A673 (cell line): ENCODE measurements at regions of chr11 and their contacts with region 1.

Region 1: DNA sequence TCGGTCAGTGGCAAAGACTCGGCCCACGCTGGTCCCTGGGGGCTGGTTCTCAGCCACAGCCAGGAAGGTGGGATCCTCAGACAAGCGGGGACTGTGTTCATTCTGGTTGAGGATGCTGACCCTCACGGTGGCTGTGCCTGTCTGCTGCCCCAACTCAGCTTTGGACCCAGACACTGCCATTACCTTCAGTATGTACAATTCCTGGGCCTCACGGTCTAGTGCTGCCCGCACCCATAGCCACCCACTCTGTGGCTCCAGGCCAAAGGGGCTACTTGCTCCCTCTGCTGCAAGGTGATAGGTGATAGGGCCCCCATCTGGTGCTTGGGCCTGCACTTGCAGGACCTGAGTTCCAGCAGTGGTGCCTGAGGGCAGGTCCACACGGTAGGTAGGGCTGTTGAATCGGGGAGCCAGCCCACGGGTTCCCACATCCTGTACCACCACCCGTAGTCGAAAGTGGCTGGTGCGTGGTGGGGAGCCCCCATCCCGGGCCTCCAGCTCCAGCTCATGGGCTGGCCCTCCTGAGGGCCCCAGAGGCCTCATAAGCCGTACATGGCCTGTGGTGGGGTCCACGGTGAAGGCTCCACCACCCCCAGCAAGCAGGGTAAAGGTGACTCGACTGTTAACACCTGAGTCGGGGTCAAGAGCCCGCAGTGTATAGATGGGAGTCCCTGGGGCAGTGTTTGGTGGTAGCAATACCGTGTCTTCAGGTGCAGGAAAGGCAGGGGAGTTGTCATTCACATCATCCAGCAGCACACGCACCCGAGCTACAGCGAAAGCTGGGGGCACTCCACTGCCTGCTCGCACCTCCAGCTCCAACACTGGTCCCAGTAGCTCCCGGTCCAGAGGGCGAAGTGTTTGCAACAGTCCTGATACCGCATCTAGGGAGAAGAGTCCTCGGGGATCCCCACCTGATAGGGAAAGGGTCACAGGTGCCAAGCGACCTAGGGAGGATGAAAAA is 13.2 kb upstream of the TPP1 start:
- DNase-seq: no peak
- H3K4me3 ChIP-seq: no peak overlapping the region
- H3K27ac ChIP-seq: no peak overlapping the region
- H3K4me1 ChIP-seq: no peaks in the 10 kb centered on the region
- H3K27me3 ChIP-seq: no peaks in the 10 kb centered on the region
- CTCF ChIP-seq: no peak

Region 2: DNA sequence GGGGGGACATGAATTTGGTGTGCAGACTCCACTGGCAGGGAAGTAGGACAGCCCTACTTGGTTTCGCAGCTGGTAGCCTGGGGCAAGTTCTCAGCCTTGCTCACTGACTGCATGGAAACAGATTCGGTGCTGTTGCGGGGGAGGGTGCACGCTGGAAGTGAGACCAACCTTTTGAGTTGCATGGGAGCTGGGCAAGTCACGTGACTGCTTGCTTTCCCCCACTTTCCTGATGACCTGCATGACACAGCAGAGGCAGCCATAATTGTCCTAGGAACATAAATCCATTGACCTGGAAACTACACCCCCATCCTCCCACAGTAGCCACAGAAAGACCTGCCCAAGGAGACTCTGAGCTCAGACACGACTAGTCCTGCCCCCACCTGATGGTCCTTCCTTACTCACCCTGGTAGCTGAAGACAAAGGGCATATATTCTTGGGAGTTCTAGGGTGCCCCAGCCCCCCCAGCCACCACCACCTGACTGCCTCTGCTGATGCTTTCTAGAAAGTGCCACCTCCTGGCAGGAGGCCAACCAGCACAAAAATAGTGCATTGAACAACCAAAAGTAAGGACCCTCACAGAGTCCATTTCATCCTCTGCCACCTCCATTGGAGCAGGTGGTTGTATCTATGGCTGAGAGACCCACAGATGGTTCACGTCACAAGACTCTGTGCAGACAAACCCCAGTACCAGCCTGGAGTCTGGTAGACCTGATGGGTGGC is 1373.7 kb before region 1 on chr11:
- CTCF ChIA-PET with region 1: interaction called, 14 read pairs
- POLR2A ChIA-PET with region 1: no interaction called
- intact Hi-C with region 1: no loop called
- DNase-seq: no peak
- H3K4me3 ChIP-seq: no peak overlapping the region
- H3K27ac ChIP-seq: no peak overlapping the region
- H3K4me1 ChIP-seq: no peaks in the 10 kb centered on the region
- H3K27me3 ChIP-seq: no peaks in the 10 kb centered on the region
- CTCF ChIP-seq: no peak

Region 3: GRCh38 chr11:6062691-6063358 is 569.6 kb before region 1 on chr11:
- CTCF ChIA-PET with region 1: no interaction called
- POLR2A ChIA-PET with region 1: no interaction called
- intact Hi-C with region 1: no loop called
- DNase-seq: no peak
- H3K4me3 ChIP-seq: no peak overlapping the region
- H3K27ac ChIP-seq: no peak overlapping the region
- H3K4me1 ChIP-seq: no peaks in the 10 kb centered on the region
- H3K27me3 ChIP-seq: no peaks in the 10 kb centered on the region
- CTCF ChIP-seq: 0 out of 2 replicates have a peak, but pooled peaks have one; percentile 10

Region 4: DNA sequence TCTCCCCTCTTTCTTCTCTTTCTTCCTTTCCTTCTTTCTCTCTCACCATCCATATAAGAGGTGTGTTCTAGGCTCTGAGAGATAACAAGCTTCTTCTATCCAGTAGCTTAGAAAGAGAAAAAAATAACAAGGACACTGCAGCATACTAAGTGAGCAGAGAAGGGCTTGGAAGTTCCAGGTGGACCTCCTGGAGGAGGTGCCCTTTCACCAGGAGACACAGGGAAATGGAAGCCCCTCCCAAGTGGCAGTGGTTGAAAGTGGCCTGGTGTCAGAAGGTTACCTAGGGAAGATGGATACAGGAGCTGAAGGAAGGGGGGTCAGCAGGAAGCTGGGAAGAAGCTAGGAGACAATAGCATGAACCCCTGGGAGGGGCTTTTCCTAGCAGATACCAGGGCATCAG is 17.7 kb after region 1 on chr11:
- CTCF ChIA-PET with region 1: no interaction called
- POLR2A ChIA-PET with region 1: no interaction called
- intact Hi-C with region 1: no loop called
- DNase-seq: no peak
- H3K4me3 ChIP-seq: no peak overlapping the region
- H3K27ac ChIP-seq: no peak overlapping the region
- H3K4me1 ChIP-seq: peaks cover 15% of the 10 kb centered on the region
- H3K27me3 ChIP-seq: no peaks in the 10 kb centered on the region
- CTCF ChIP-seq: no peak

Region 5: DNA sequence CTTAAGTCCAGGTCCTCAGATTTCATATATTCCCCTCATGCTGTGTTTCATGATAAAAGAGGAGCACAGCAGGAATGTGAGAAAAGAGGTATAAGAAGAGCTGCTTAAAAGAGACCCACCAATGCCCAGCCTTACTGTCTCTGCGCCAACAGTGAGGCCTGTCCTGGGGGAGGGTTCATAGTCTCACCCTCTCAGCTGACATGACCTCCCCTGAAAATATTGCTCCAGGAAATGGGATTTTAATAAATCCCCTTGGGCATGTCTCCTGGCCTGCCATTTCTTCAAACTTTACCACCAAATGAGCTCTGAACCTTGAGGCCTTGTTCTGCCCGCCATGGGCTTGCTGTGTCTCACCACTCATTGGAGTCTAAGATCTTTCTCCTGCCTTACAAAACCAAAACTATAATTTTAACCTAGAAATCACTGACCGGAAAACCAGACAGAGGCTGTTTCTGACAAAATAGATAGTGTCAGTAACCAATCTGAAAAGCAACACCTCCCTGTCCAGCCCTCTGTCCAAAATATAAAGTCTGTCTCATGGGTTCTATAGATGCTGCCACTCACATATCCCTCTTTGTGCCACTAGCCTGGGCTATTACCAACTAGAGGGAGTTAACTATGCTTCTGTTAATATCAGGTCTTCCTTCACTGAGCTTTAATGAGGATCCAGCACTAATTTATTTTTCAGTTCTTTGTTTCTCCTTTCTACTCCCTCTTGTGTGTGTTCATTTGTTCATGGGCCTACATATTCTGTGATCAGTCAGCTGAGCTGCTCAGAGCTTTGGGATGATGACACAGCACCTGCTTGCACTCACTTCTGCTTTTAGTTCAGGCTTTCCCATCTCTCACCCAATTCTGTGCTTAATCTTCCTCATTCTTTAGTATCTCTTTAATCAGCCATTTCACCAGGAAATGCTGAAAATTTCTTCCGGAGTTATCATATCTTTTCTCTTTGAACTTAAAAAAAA is 139.8 kb after region 1 on chr11 and contains the start of gene OR2AG2:
- CTCF ChIA-PET with region 1: no interaction called
- POLR2A ChIA-PET with region 1: no interaction called
- intact Hi-C with region 1: no loop called
- DNase-seq: no peak
- H3K4me3 ChIP-seq: no peak within 1 kb of the TSS
- H3K27ac ChIP-seq: no peak within 1 kb of the TSS
- H3K4me1 ChIP-seq: no peaks in the 10 kb centered on the region
- H3K27me3 ChIP-seq: no peaks in the 10 kb centered on the region
- CTCF ChIP-seq: no peak
- total RNA-seq, gene OR2AG2: not detected in 2 replicates